ENCODE measurements at regions of chr9 and their contacts with region 1.

Region 1: DNA sequence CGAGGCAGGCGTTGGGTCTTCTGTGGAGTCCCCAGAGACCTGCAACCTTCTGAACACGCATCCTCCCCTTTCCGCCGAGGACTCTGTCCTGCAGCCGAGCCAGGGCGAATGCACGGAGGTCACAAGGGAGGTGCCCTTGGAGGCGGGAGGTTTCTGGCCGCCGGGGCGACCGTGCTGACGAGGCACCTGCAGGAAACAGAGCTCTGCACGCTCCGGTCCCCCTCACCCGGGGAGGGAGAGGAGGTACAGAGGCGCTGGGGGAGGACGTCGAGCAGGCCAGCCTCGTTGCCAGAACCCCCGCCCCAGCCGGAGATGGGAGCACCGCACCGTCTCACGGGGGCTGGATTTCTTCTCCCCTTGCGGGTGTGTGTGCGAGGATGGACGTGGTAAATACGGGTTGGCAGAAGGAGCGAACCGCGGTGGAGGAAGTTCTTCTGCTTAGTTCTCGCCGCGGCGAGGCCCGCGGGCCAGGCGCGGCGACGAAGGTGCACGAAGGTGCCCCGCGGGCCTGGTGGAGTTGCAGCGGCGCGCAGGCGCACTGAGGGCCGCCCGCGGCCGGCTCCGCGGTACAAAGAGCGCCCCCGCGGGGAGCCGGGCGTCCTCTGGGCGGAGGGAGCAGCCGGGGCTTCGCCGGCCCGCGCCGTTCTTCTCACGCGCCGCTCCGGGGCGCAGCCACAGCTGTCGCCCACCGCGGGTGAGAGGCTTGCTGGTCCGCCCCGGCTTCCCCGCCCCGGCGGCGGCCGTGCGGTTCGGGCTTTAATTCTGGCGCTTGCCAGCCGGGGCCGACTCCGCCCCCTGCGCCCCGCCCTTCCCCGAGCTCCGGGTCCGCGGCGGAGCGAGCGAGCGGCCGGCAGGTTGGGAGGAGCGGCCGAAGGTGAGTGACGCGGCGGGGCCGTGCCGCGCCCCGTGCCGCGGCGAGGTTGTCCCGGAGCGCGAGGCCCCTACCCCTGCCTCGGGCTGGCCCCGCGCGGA is 289.5 kb downstream of the DOCK8 start:
- DNase-seq: peak; percentile 81
- H3K4me3 ChIP-seq: peak within 1 kb of the TSS; percentile 63 to 87 (median 83)
- H3K27ac ChIP-seq: peak within 1 kb of the TSS; percentile 52
- H3K4me1 ChIP-seq: peaks cover 14% of the 10 kb centered on the region
- H3K27me3 ChIP-seq: no peaks in the 10 kb centered on the region
- CTCF ChIP-seq: peak in 1 of 2 donors; percentile 36

Region 2: GRCh38 chr9:419571-420402 is 84.4 kb before region 1 on chr9:
- CTCF ChIA-PET with region 1: no interaction called
- dilution Hi-C with region 1: no loop called
- in situ Hi-C with region 1: no loop called
- intact Hi-C with region 1: no loop called
- DNase-seq: peak; percentile 68
- H3K4me3 ChIP-seq: no peak overlapping the region
- H3K27ac ChIP-seq: no peak overlapping the region
- H3K4me1 ChIP-seq: peaks cover 6% of the 10 kb centered on the region
- H3K27me3 ChIP-seq: no peaks in the 10 kb centered on the region
- CTCF ChIP-seq: no peak

Region 3: DNA sequence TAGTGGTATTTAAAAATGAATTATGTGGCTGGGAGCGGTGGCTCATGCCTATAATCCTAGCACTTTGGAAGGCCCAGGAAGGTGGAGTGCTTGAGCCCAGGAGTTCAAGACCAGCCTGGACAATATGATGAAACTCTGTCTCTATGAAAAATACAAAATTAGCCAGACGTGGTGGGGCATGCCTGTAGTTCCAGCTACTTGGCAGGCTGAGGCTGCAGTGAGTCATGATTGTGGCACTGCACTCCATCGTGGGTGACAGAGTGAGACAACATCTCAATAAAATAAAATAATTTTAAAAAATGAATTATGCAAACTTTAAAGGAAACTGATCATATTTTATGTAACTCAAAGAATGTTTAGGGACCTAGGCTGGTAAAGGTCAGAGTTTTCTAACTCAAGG is 26.5 kb after region 1 on chr9:
- CTCF ChIA-PET with region 1: no interaction called
- dilution Hi-C with region 1: no loop called
- in situ Hi-C with region 1: no loop called
- intact Hi-C with region 1: loop called (anchors 2 kb)
- DNase-seq: peak; percentile 77
- H3K4me3 ChIP-seq: no peak overlapping the region
- H3K27ac ChIP-seq: peak overlapping the region; percentile 59
- H3K4me1 ChIP-seq: peaks cover 43% of the 10 kb centered on the region
- H3K27me3 ChIP-seq: no peaks in the 10 kb centered on the region
- CTCF ChIP-seq: no peak

Region 4: GRCh38 chr9:589723-590122 is 85.6 kb after region 1 on chr9:
- CTCF ChIA-PET with region 1: no interaction called
- dilution Hi-C with region 1: no loop called
- in situ Hi-C with region 1: no loop called
- intact Hi-C with region 1: loop called (anchors 5 kb)
- DNase-seq: peak; percentile 11
- H3K4me3 ChIP-seq: peak overlapping the region in 1 of 3 experiments; percentile 12
- H3K27ac ChIP-seq: peak overlapping the region; percentile 53
- H3K4me1 ChIP-seq: peaks cover 32% of the 10 kb centered on the region
- H3K27me3 ChIP-seq: no peaks in the 10 kb centered on the region
- CTCF ChIP-seq: no peak

Region 5: DNA sequence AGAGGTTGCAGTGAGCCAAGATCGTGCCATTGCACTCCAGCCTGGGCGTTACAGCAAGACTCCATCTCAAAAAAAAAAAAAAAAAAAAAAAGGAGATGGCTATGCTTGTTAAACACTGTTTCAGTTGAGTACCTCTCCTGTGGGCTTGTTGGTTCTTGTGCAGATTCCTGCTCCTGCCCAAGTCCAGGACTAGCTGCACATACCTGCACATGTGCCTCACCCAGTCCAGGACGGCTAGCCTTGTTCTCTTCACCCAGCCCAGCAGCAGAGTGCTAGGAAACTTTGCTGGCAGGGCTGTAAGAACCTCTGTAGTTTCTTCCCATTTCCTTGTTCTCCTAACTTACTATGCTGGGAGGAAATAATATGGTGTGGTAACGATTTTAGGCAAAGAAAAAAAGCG is 103.2 kb after region 1 on chr9:
- CTCF ChIA-PET with region 1: no interaction called
- dilution Hi-C with region 1: no loop called
- in situ Hi-C with region 1: no loop called
- intact Hi-C with region 1: loop called (anchors 2 kb)
- DNase-seq: peak; percentile 90
- H3K4me3 ChIP-seq: no peak overlapping the region
- H3K27ac ChIP-seq: peak overlapping the region; percentile 86
- H3K4me1 ChIP-seq: peaks cover 19% of the 10 kb centered on the region
- H3K27me3 ChIP-seq: no peaks in the 10 kb centered on the region
- CTCF ChIP-seq: no peak

Region 6: DNA sequence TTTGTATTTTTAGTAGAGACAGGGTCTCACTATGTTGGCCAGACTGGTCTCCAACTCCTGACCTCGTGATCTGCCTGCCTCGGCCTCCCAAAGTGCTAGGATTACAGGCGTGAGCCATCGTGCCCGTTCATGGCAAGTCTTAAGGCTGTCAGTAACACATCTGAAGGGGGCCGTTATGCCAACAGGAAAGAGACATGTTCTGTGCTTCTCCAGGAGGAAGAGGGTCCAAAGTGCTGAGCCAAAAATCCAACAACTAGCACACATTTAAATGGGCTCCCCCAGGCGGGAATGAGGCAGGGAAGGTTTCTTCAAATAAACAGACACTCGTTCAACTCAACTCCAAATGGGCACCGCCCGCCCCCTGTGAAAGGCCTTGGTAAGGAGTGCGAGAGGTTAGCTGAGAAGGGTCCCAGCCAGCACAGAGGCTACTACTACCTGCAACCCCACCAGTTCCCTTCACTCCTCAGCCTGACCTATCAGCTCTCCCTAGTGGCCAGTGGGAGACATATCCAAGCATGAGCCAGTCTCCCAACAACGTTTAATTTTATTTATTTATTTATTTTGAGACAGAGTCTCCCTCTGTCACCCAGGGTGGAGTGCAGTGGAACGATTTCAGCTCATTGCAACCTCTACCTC is 253.2 kb after region 1 on chr9:
- CTCF ChIA-PET with region 1: no interaction called
- dilution Hi-C with region 1: no loop called
- in situ Hi-C with region 1: no loop called
- intact Hi-C with region 1: loop called (anchors 10 kb)
- DNase-seq: peak; percentile 51
- H3K4me3 ChIP-seq: no peak overlapping the region
- H3K27ac ChIP-seq: no peak overlapping the region
- H3K4me1 ChIP-seq: peaks cover 25% of the 10 kb centered on the region
- H3K27me3 ChIP-seq: no peaks in the 10 kb centered on the region
- CTCF ChIP-seq: peak; percentile 46 to 74

Measured in mammary epithelial cell (primary cell).